ENCODE measurements at regions of chr10 and their contacts with region 1.

Region 1: GRCh38 chr10:57955076-57955475 is 312.6 kb downstream of the IPMK start:
- DNase-seq: no peak
- ATAC-seq: no peak
- H3K4me3 ChIP-seq: no peak overlapping the region
- H3K27ac ChIP-seq: no peak overlapping the region
- H3K4me1 ChIP-seq: peaks cover 0 to 3% (median 0%) of the 10 kb centered on the region in 12 donors
- H3K27me3 ChIP-seq: no peaks in the 10 kb centered on the region
- CTCF ChIP-seq: no peak
- POLR2A ChIP-seq: no peak

Region 2: DNA sequence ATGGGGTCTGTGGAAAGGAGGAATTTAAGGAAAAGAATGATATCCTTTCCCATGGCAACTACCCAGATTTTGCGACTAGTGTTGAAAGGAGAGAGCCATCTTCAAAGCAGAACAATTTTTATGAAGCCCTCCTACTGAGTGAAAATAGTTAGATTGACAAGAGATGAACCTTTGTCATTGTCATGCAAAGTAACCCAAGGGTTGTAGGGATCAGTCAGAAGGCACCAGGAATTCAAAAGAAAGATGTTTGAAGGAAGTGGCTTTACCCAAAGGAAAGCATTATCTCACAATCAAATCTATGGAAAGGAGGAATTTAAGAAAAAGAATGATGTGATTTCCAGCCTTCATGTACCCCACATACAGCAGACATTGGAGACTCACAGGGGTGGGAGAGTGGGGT is 231.8 kb before region 1 on chr10:
- intact Hi-C with region 1: loop called in 1 of 10 experiments (anchors 5 kb)
- DNase-seq: no peak
- ATAC-seq: no peak
- H3K4me3 ChIP-seq: no peak overlapping the region
- H3K27ac ChIP-seq: no peak overlapping the region
- H3K4me1 ChIP-seq: no peaks in the 10 kb centered on the region
- H3K27me3 ChIP-seq: no peaks in the 10 kb centered on the region
- CTCF ChIP-seq: no peak
- POLR2A ChIP-seq: no peak

Region 3: DNA sequence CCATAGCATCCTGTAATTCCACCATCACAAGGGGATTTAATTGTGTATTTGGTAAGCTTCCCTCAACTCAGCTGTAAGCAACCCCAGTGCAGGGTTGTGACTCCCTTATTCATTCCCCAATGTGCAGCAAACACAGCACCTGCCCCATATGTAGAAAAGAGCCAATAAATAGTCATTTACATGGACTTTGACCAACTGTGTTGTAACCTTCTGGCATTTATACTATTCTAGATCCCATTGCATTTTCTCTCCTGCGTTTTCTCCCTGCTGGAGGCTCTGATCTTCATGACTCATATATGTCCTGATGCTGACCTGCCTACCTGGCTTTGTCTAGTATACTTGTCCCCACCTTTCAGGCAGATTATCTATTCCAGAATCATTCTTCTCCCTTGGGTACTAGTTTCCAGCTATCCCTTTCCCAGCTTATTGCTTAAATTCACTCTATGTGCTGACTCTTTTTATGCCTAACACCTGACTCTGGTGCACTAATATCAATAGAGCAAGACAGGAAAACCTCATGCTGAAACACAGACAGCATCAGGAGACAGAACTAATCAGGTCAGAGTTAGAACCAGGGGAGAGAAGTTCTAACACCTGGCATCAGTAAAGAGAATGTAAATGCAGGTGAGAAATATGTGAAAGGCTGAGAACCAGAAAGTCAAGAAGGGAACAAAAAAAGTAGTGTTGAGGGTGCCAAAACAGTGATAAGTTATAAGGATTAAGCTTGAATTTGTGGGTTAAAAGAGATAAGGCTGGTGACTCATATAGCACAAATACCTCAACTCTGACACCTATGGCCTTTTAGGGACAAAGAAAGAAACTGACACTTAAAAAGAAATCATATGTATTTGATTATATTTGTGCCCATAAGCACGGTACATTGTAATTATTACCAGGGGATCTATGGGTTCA is 90.1 kb before region 1 on chr10:
- intact Hi-C with region 1: no loop called
- DNase-seq: no peak
- ATAC-seq: no peak
- H3K4me3 ChIP-seq: no peak overlapping the region
- H3K27ac ChIP-seq: no peak overlapping the region
- H3K4me1 ChIP-seq: no peaks in the 10 kb centered on the region
- H3K27me3 ChIP-seq: no peaks in the 10 kb centered on the region
- CTCF ChIP-seq: no peak
- POLR2A ChIP-seq: no peak